ENCODE measurements at regions of chr5 and their contacts with region 1.

Region 1: DNA sequence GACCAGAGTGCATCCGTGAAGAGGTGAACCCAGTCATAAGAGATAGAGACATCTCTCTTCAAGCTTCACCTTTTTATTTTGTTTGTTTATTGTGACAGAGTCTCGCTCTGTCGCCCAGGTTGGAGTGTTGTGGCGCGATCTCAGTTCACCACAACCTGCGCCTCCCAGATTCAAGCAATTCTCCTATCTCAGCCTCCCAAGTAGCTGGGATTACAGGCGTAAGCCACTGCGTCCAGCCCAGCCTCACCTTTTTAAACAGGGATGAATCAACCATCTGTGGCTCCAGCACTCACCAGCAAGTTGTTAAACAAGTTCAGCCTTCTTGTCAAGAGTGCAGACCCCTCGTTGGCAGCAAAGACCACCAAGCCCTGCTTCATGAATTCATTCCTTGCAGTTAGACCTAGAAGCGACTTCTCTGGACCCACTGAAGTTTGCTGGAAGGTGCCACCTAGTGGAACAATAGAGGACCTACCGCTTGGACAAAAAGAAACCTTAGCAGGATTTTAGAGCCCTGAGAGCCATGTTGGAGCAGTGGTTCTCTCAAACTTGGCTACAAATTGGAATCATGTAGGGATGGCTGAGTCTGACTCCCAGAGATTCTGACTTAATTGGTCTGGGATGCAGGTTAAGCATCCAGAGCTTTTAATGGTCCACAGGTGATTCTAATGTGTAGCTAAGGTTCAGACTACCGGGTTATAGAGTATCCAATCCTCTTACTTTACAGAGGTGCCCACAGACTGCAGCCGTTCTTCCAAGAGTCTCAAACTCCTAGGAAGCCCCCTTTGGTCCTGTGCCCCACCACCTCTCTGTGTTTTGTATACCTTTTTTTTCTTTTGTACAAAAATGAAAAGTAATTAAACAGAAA is 10.5 kb upstream of the GALNT10 start:
- DNase-seq: peak in 1 of 2 donors; percentile 37
- ATAC-seq: peak; percentile 74 to 89 (median 83)
- H3K4me3 ChIP-seq: no peak overlapping the region
- H3K27ac ChIP-seq: no peak overlapping the region
- H3K4me1 ChIP-seq: peaks cover 0 to 10% (median 0%) of the 10 kb centered on the region in 9 donors
- H3K27me3 ChIP-seq: no peaks in the 10 kb centered on the region
- CTCF ChIP-seq: peak; percentile 57 to 88 (median 80)

Region 2: DNA sequence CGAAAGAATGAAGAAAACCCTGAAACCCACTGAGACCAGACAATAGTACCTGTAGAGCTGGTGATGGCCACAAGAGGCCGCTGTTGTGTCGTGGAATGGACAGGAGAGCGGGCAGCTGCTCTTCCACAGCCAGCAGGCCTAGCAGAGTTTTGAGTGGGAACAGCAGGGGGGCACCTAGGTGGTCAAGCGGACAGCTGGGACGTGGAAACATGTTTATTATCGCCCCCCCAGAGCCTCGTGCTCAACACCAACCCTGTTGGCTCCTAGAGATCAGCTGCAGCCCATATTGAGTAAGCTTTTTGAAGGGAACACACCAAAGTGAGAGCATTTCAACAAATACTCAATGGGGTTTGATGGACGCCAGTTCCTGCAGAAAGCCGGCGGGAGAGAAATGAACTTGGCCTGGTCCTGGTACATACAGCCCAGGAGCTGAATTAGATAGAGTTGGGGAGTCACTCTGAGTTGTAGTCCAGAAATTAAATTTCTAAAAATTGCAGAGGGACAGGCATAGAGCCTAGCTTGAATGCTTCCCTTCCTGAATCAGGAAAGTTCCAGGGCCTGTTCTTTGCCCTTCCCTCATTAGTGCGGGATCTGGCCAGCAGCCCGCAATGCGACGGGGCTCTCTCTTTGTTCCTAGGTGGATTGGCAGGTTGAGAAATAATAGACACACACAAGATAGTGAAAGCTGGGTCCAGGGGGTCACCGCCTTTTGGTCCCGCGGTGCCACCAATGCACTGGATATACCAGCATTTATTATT is 107.5 kb before region 1 on chr5:
- intact Hi-C with region 1: loop called (anchors 1 to 5 kb)
- DNase-seq: peak; percentile 82 to 83
- ATAC-seq: peak; percentile 89 to 96 (median 93)
- H3K4me3 ChIP-seq: no peak overlapping the region
- H3K27ac ChIP-seq: peak overlapping the region in 4 of 10 donors; percentile 7 to 41 (median 11)
- H3K4me1 ChIP-seq: peaks cover under 1 to 35% (median 14%) of the 10 kb centered on the region in 9 donors
- H3K27me3 ChIP-seq: no peaks in the 10 kb centered on the region
- CTCF ChIP-seq: peak; percentile 79 to 97 (median 93)